CD8-positive, alpha-beta T cell (primary cell): ENCODE measurements at regions of chr6 and their contacts with region 1.

Region 1: DNA sequence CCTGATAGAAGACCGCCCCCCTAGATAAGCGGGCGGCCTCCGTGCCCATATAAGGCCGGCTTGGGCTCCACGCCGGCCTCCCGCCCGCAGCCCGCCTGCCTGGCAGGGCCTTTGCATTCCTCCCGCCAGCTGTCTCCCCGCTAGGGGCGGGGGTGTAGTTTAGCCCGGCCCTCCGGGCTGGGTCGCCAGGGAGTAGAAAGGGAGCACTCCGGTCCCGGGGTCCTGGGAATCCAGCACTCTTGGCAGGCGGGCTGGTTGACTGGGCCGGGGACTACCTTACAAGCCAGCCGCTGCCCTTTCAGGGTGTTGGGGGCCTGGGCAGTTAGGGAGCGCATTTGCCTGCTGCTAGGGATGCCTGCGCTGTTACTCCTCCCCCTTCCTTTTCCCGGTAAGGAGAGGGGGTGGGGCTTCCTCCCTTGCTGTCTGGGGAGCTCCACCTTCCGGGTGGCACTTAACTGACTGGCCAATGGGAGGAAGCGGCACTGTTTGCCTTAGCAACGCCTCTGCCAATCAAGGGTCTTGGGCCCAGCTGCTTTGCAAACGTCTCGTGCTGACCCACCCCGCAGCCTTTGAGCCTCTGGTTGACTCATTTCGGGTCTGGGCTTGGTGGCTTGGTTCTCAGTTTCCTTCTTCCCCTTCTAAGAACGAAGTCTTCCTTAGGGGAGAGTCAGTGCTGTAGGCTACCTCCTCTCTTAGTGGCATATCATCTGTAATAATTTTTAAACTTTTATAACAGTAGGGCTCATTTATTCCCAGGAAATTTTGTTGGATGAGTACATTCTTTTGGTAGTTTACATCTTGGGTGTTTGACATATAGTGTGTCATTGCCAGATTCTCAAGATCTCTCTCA is 3.4 kb downstream of the SRF start:
- DNase-seq: peak; percentile 77 to 98 (median 92)
- ATAC-seq: peak; percentile 52
- H3K4me3 ChIP-seq: peak overlapping the region; percentile 4 to 50
- H3K4me3 Mint-ChIP-seq: peak overlapping the region; percentile 63
- H3K27ac ChIP-seq: peak overlapping the region; percentile 62 to 89
- H3K27ac Mint-ChIP-seq: peak overlapping the region; percentile 95
- H3K4me1 ChIP-seq: peaks cover 40% of the 10 kb centered on the region
- H3K4me1 Mint-ChIP-seq: peaks cover 45% of the 10 kb centered on the region
- H3K27me3 ChIP-seq: no peaks in the 10 kb centered on the region
- H3K27me3 Mint-ChIP-seq: no peaks in the 10 kb centered on the region
- CTCF ChIP-seq: no peak

Region 2: DNA sequence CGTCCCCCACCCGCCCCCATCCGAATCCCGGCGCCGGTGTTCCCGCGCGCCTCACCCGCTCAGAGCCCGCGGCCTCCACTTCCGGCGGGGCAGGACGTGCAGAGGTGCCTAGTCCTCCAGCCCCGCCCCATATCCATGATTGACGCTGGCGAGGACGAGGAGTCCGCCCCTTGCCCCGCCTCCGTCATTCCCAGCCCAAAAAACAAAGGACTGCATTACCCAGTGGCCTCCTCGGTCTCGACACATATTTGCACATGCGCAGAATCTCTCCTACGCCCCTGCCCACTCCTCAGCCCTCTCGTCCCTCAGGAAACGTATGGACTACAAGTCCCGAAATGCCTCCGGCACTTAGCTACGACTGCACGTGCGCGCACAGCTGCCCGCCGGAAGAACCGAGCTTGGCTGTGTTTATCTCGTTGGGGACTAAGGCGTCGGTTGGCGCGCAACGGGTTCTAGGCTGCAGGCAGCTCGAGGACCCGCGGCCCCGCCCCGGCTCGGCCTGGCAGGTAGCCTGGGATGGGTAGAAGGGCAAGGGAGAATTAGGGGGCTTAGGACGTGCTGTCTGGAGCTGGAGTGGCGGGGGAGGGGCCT is 160.6 kb before region 1 on chr6 and contains the starts of genes KLHDC3 and MEA1:
- CTCF ChIA-PET with region 1: no interaction called
- POLR2A ChIA-PET with region 1: no interaction called
- intact Hi-C with region 1: loop called (anchors 1 kb)
- DNase-seq: peak; percentile 95 to 100 (median 98)
- ATAC-seq: peak; percentile 96
- H3K4me3 ChIP-seq: peak within 1 kb of the TSS; percentile 79 to 84
- H3K4me3 Mint-ChIP-seq: peak within 1 kb of the TSS; percentile 95
- H3K27ac ChIP-seq: peak within 1 kb of the TSS; percentile 60 to 74
- H3K27ac Mint-ChIP-seq: peak within 1 kb of the TSS; percentile 94
- H3K4me1 ChIP-seq: peaks cover 29% of the 10 kb centered on the region
- H3K4me1 Mint-ChIP-seq: peaks cover 63% of the 10 kb centered on the region
- H3K27me3 ChIP-seq: no peaks in the 10 kb centered on the region
- H3K27me3 Mint-ChIP-seq: no peaks in the 10 kb centered on the region
- CTCF ChIP-seq: no peak
- total RNA-seq, gene KLHDC3: 20.9 to 21.7 TPM
- total RNA-seq, gene MEA1: 14.5 to 15.3 TPM

Region 3: GRCh38 chr6:43228951-43229802 is 54.7 kb after region 1 on chr6 and contains the start of gene DNPH1:
- CTCF ChIA-PET with region 1: interaction called, 4 read pairs
- POLR2A ChIA-PET with region 1: interaction called, 3 read pairs
- intact Hi-C with region 1: loop called (anchors 1 to 2 kb)
- DNase-seq: peak; percentile 62 to 90 (median 79)
- ATAC-seq: peak; percentile 62
- H3K4me3 ChIP-seq: peak within 1 kb of the TSS; percentile 48 to 69
- H3K4me3 Mint-ChIP-seq: peak within 1 kb of the TSS; percentile 87
- H3K27ac ChIP-seq: peak within 1 kb of the TSS; percentile 49 to 60
- H3K27ac Mint-ChIP-seq: peak within 1 kb of the TSS; percentile 94
- H3K4me1 ChIP-seq: peaks cover 43% of the 10 kb centered on the region
- H3K4me1 Mint-ChIP-seq: peaks cover 40% of the 10 kb centered on the region
- H3K27me3 ChIP-seq: no peaks in the 10 kb centered on the region
- H3K27me3 Mint-ChIP-seq: no peaks in the 10 kb centered on the region
- CTCF ChIP-seq: peak; percentile 92
- total RNA-seq, gene DNPH1: 19.6 to 26.8 TPM

Region 4: GRCh38 chr6:43369174-43370022 is 194.9 kb after region 1 on chr6 and contains the start of gene ZNF318:
- CTCF ChIA-PET with region 1: no interaction called
- POLR2A ChIA-PET with region 1: no interaction called
- intact Hi-C with region 1: loop called in 1 of 2 experiments (anchors 1 kb)
- DNase-seq: peak; percentile 85 to 98 (median 93)
- ATAC-seq: peak; percentile 95
- H3K4me3 ChIP-seq: peak within 1 kb of the TSS; percentile 69 to 81
- H3K4me3 Mint-ChIP-seq: peak within 1 kb of the TSS; percentile 89
- H3K27ac ChIP-seq: peak within 1 kb of the TSS; percentile 76 to 87
- H3K27ac Mint-ChIP-seq: peak within 1 kb of the TSS; percentile 96
- H3K4me1 ChIP-seq: peaks cover 33% of the 10 kb centered on the region
- H3K4me1 Mint-ChIP-seq: peaks cover 43% of the 10 kb centered on the region
- H3K27me3 ChIP-seq: no peaks in the 10 kb centered on the region
- H3K27me3 Mint-ChIP-seq: no peaks in the 10 kb centered on the region
- CTCF ChIP-seq: no peak
- total RNA-seq, gene ZNF318: 18.2 TPM

Region 5: GRCh38 chr6:43629505-43630300 is 455.2 kb after region 1 on chr6:
- CTCF ChIA-PET with region 1: no interaction called
- POLR2A ChIA-PET with region 1: no interaction called
- intact Hi-C with region 1: loop called in 1 of 2 experiments (anchors 1 kb)
- DNase-seq: peak; percentile 66 to 96 (median 84)
- ATAC-seq: peak; percentile 51
- H3K4me3 ChIP-seq: peak overlapping the region; percentile 77 to 82
- H3K4me3 Mint-ChIP-seq: peak overlapping the region; percentile 98
- H3K27ac ChIP-seq: peak overlapping the region; percentile 53 to 75
- H3K27ac Mint-ChIP-seq: peak overlapping the region; percentile 95
- H3K4me1 ChIP-seq: peaks cover 15% of the 10 kb centered on the region
- H3K4me1 Mint-ChIP-seq: peaks cover 39% of the 10 kb centered on the region
- H3K27me3 ChIP-seq: no peaks in the 10 kb centered on the region
- H3K27me3 Mint-ChIP-seq: no peaks in the 10 kb centered on the region
- CTCF ChIP-seq: no peak